A673 (cell line): ENCODE measurements at regions of chr5 and their contacts with region 1.

Region 1: DNA sequence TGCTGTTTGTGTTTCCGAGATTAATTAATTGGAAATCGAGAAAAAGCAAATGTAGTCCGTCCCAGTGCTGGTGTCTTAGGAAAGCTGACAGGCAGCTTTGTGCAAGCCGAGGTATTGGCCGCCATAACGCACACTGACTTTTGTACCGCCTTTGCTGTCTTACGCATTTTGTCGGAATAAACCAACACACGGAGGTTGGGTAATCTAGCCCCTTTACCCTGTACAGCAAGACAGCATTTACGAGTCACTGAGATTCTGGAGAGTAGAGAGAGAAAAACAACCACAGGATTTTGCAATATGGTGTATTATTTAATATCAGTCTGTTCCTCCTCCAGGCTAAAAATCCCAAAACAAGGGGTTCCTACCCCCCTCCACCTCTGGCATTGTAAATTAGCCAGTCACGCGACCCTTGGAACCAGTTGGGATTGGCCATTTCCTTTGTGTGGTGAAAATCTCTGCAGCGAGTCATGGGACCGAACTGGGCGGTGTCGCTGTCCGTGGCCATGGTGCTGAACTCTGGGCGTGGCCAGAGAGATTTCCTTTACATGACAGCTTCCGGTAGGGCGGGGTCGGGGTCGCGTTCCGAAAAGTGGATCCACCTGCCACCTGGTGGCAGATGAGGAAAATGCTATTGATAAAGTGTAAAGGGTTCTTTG is 10.3 kb upstream of the PCDHB1 start:
- DNase-seq: peak; percentile 99
- H3K4me3 ChIP-seq: peak overlapping the region; percentile 69
- H3K27ac ChIP-seq: peak overlapping the region; percentile 98
- H3K4me1 ChIP-seq: peaks cover 22% of the 10 kb centered on the region
- H3K27me3 ChIP-seq: peaks cover 27% of the 10 kb centered on the region
- CTCF ChIP-seq: peak; percentile 79

Region 2: DNA sequence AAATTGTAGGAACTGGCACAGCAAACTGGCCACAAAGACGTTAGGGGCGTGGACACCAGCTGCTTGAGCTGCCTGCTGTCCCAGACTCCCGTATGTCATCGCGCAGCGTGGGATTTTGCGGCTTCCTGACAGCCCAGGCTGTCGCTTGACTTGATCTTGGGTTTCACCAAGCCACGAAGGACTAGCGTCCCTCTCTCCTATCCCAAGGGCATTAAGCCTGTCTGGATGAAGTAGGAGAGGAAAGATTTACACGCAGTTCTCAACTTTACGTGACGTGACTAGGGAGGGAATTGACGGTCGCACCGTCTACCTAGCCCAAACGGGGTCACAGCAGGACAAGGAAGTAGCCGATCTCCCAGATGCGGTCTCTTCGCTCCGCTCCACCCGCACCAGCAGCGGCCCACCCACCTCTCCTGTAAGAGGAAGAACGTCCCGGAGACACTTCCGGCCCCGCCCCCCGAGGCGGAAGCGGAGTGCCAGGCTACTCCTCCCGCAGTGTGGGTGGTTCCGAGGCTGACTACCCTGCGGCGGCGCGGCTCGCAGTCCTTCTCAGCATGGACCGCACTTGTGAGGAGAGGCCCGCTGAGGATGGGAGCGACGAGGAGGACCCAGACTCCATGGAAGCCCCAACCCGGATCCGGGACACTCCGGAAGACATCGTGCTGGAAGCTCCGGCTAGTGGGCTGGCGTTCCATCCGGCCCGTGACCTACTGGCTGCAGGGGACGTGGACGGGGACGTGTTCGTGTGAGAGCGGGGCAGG is 376.4 kb before region 1 on chr5 and contains the start of gene WDR55:
- CTCF ChIA-PET with region 1: no interaction called
- POLR2A ChIA-PET with region 1: no interaction called
- intact Hi-C with region 1: no loop called
- DNase-seq: peak; percentile 98
- H3K4me3 ChIP-seq: peak within 1 kb of the TSS; percentile 86
- H3K27ac ChIP-seq: peak within 1 kb of the TSS; percentile 80
- H3K4me1 ChIP-seq: peaks cover 6% of the 10 kb centered on the region
- H3K27me3 ChIP-seq: no peaks in the 10 kb centered on the region
- CTCF ChIP-seq: no peak
- total RNA-seq, gene WDR55: 31.1 and 33.2 TPM in 2 replicates

Region 3: GRCh38 chr5:140827704-140828361 is 213.1 kb before region 1 on chr5 and contains the start of gene PCDHA6:
- CTCF ChIA-PET with region 1: interaction called, 7 read pairs
- POLR2A ChIA-PET with region 1: no interaction called
- intact Hi-C with region 1: loop called (anchors 5 kb)
- DNase-seq: peak; percentile 70
- H3K4me3 ChIP-seq: peak within 1 kb of the TSS; percentile 58
- H3K27ac ChIP-seq: peak within 1 kb of the TSS; percentile 69
- H3K4me1 ChIP-seq: no peaks in the 10 kb centered on the region
- H3K27me3 ChIP-seq: no peaks in the 10 kb centered on the region
- CTCF ChIP-seq: peak; percentile 70
- total RNA-seq, gene PCDHA6: 12.6 and 12.7 TPM in 2 replicates

Region 4: GRCh38 chr5:140868721-140869554 is 172.0 kb before region 1 on chr5 and contains the start of gene PCDHA11:
- CTCF ChIA-PET with region 1: interaction called, 18 read pairs
- POLR2A ChIA-PET with region 1: no interaction called
- intact Hi-C with region 1: loop called (anchors 2 kb)
- DNase-seq: peak; percentile 85
- H3K4me3 ChIP-seq: peak within 1 kb of the TSS; percentile 55
- H3K27ac ChIP-seq: peak within 1 kb of the TSS; percentile 62
- H3K4me1 ChIP-seq: peaks cover 12% of the 10 kb centered on the region
- H3K27me3 ChIP-seq: no peaks in the 10 kb centered on the region
- CTCF ChIP-seq: peak; percentile 81
- total RNA-seq, gene PCDHA11: 11.4 and 15.5 TPM in 2 replicates

Region 5: DNA sequence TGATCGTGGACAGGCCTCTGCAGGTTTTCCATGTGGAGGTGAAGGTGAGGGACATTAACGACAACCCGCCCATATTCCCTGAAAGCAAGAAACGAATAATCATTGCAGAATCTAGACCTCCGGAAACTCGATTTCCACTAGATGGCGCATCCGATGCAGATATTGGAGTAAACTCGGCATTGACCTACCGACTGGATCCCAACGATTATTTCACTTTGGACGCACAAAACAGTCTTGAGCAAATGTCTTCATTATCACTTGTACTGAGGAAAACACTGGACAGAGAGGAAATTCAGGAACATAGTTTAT is 158.4 kb before region 1 on chr5:
- CTCF ChIA-PET with region 1: interaction called, 25 read pairs
- POLR2A ChIA-PET with region 1: no interaction called
- intact Hi-C with region 1: loop called (anchors 1 kb)
- DNase-seq: peak; percentile 89
- H3K4me3 ChIP-seq: peak overlapping the region; percentile 51
- H3K27ac ChIP-seq: peak overlapping the region; percentile 36
- H3K4me1 ChIP-seq: no peaks in the 10 kb centered on the region
- H3K27me3 ChIP-seq: no peaks in the 10 kb centered on the region
- CTCF ChIP-seq: peak; percentile 75

Region 6: DNA sequence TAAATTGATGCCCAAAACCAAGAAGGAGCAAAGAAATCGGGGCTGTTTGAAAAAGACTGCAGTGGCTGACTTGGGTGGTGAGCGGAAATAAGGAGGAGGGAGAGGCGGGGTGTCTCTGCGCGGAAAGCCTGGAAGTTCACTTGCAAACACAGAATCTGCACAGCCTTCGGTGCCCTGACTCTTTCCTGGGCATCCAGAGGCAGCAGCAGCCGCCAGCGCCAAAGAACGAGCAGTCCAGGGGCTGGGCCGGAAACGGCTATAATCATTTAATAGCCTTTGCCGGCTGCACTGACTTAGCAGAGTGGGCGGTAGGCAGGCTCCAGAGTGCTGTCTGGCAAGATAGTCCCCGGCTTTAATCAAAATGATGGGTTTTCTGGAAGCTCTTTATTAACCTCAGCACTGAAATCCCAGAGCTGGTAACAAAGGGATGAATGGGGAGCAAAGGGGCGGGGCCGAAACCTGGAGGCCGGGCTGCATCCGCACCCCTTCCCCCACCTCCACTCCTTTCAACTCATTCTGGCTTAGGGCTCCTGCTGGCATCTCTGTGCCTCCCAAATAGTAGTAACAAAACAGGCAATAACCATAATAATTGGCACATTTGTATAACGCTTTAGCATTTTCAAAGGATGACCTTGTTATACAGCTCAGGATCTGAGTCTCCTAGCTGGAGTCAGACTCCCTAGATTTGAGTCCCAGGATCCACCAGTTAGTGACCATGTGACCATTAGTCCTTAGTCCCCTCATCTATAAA is 38.9 kb before region 1 on chr5:
- CTCF ChIA-PET with region 1: interaction called, 8 read pairs
- POLR2A ChIA-PET with region 1: interaction called, 4 read pairs
- intact Hi-C with region 1: loop called (anchors 1 kb)
- DNase-seq: peak; percentile 98
- H3K4me3 ChIP-seq: peak overlapping the region; percentile 38
- H3K27ac ChIP-seq: peak overlapping the region; percentile 91
- H3K4me1 ChIP-seq: peaks cover 72% of the 10 kb centered on the region
- H3K27me3 ChIP-seq: no peaks in the 10 kb centered on the region
- CTCF ChIP-seq: no peak

Region 7: GRCh38 chr5:141172378-141173204 is 131.7 kb after region 1 on chr5 and contains the start of gene PCDHB7:
- CTCF ChIA-PET with region 1: no interaction called
- POLR2A ChIA-PET with region 1: no interaction called
- intact Hi-C with region 1: no loop called
- DNase-seq: peak; percentile 85
- H3K4me3 ChIP-seq: peak within 1 kb of the TSS; percentile 16
- H3K27ac ChIP-seq: no peak within 1 kb of the TSS
- H3K4me1 ChIP-seq: no peaks in the 10 kb centered on the region
- H3K27me3 ChIP-seq: no peaks in the 10 kb centered on the region
- CTCF ChIP-seq: peak; percentile 83
- total RNA-seq, gene PCDHB7: 2.0 and 2.3 TPM in 2 replicates